ENCODE measurements at regions of chr4 and their contacts with region 1.

Region 1: GRCh38 chr4:140252742-140253555 is 99.0 kb upstream of the MAML3 start:
- DNase-seq: peak; percentile 56
- ATAC-seq: peak; percentile 84
- H3K4me3 ChIP-seq: peak overlapping the region; percentile 42
- H3K27ac ChIP-seq: peak overlapping the region; percentile 78
- H3K4me1 ChIP-seq: peaks cover 25% of the 10 kb centered on the region
- H3K27me3 ChIP-seq: no peaks in the 10 kb centered on the region
- CTCF ChIP-seq: peak; percentile 89
- POLR2A ChIP-seq: no peak
- RAD21 ChIP-seq: peak; percentile 88

Region 2: DNA sequence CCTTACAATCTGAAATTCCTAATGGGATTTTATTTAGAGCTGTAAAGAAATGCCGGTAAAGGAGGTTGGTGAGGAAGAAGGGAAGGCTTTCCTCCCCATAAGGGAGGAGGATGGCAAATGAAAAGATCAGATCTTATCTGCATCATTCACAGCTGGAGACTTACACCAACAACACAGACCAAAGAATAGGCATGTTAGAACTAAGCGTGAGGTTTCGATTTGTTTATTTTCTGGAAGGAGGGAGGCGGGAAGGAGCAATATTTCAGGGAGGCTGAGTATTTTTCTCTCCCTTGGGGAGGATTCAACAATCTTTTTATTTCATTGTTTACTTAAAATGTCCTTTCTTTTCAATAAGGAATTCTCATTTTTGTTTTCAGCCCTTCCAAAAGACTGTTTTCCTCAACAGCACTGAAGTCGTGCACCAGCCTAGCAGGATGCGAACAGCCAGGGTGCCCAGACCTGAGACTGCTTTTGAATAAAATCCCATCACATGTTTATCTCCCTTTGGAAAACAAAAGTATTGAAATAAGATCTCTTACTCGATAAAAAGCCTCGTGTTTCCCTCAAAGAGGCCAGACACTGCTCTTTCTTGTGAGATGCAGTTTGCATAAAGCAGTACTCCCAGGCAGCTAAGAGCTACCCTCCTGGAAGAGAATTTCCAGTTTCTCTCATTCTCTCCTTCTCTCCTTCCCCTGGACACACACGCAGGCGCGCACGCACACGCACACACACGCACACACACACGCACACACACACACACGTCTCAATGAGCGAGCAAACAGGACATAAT is 351.2 kb before region 1 on chr4:
- CTCF ChIA-PET with region 1: no interaction called
- POLR2A ChIA-PET with region 1: no interaction called
- dilution Hi-C with region 1: no loop called
- in situ Hi-C with region 1: no loop called
- intact Hi-C with region 1: loop called (anchors 10 kb)
- DNase-seq: peak; percentile 44
- ATAC-seq: peak; percentile 68
- H3K4me3 ChIP-seq: peak overlapping the region; percentile 38
- H3K27ac ChIP-seq: peak overlapping the region; percentile 26; the same call in 1 of the 2 replicates
- H3K4me1 ChIP-seq: peaks cover 4% of the 10 kb centered on the region
- H3K27me3 ChIP-seq: no peaks in the 10 kb centered on the region
- CTCF ChIP-seq: no peak
- POLR2A ChIP-seq: no peak
- RAD21 ChIP-seq: no peak

Region 3: DNA sequence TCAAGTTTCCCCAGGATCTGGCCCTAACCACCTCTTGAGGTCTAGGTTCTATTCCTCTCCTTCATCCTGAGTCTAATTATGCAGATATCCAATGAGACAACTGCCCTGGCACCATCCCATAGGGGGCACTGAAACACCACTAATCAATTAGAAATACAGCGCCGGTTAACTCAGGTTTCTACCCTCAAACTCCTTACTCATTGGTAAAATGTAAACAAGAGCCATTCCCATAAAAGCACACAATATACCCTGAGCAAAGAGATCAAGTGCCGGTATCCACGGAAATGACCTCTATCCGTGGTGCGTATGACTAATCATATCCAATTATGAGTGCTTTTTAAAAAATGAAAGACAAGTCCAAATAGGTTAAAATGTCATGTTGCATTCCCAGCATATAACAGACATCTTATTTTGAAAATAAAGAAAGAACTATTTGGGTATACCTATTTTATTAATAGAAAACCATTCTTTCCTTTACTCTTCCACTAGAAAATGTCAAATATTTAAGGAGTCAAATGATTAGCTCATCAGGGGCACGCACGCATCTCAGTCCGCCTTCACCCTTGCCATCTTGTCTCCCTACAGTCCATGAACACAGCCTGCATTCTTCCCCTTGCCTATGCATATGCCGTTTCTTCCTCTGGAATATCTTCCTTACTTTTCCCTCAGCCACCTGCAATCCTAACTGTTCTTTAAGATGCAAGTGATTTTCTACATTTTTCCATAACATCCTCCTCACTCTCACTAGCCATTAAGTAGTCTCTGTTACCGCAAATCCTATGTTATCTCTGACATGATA is 240.1 kb before region 1 on chr4:
- CTCF ChIA-PET with region 1: interaction called, 8 read pairs
- POLR2A ChIA-PET with region 1: no interaction called
- dilution Hi-C with region 1: no loop called
- in situ Hi-C with region 1: loop called (anchors 5 kb)
- intact Hi-C with region 1: loop called (anchors 1 kb)
- DNase-seq: peak; percentile 95
- ATAC-seq: peak; percentile 98
- H3K4me3 ChIP-seq: no peak overlapping the region
- H3K27ac ChIP-seq: no peak overlapping the region
- H3K4me1 ChIP-seq: peaks cover 4% of the 10 kb centered on the region
- H3K27me3 ChIP-seq: no peaks in the 10 kb centered on the region
- CTCF ChIP-seq: peak; percentile 91
- POLR2A ChIP-seq: no peak
- RAD21 ChIP-seq: peak; percentile 95

Region 4: DNA sequence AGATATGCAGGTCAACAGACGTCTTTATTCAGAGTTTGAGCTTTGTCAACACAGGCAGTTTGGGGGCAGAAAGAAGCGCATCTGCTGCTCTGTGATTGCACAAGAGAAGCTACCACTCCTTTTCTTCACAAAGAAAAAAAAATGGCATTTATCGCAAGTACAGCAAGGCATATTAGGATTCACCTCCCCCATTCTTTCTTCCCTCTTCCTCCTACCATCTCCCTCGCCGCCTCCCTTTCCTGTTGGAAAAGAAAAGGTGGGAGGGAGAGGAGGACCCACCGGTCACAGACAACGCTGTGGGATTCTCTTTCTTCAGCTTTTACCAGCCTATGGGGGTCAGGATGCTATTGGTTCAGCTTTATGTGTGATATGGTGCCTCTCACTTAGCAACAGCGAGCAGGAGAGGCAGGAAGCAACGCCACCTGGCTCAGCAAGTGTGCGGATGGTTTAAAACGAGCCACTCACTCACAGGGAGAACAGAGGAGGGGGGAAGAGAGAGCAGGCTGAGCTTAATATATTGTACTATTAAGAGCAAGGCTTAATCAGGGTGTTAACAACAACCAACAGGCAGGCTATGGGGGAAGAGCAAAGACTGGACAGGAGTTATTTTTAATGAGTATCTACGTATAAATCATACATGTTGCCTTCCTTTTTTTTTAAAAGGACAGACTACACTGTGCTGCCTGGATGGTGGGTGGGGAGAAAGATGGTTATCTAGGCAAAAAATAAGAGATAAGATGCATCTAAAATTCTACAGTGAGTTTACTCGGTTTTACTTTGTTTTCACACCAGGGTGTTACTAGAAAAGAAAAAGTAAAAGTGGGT is 203.7 kb before region 1 on chr4:
- CTCF ChIA-PET with region 1: interaction called, 5 read pairs
- POLR2A ChIA-PET with region 1: no interaction called
- dilution Hi-C with region 1: no loop called
- in situ Hi-C with region 1: no loop called
- intact Hi-C with region 1: loop called (anchors 2 kb)
- DNase-seq: peak; percentile 57
- ATAC-seq: peak; percentile 55
- H3K4me3 ChIP-seq: peak overlapping the region; percentile 34
- H3K27ac ChIP-seq: peak overlapping the region; percentile 79
- H3K4me1 ChIP-seq: peaks cover 12% of the 10 kb centered on the region
- H3K27me3 ChIP-seq: no peaks in the 10 kb centered on the region
- CTCF ChIP-seq: no peak
- POLR2A ChIP-seq: no peak
- RAD21 ChIP-seq: no peak

Region 5: DNA sequence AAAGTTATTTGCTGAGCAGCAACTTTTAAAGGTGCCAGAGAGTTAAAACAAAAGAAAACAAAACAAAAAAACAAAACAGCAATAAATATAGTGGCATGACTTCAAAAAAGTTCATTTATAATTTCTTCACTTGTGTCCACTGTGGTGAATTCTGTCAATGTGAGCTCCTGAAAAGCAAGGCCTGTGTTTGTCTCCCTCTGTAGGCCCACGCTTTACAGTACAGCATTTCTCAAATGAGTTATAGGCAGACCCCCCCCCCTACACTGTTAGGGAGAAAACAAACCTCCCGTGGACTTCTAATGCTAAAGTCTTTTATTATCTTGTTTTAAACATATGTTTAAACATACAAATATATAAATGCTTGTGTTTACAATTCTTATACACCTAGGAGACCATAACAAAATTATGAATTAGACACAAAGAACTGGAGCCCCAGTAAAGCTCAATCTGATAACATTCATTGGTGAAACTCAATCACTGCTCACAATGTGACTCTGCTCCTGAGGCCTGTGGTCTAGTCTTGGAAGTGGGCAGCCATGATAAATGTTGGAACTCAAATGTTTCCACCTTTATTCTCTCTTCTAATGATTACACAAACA is 73.5 kb after region 1 on chr4:
- CTCF ChIA-PET with region 1: interaction called, 7 read pairs
- POLR2A ChIA-PET with region 1: no interaction called
- dilution Hi-C with region 1: no loop called
- in situ Hi-C with region 1: no loop called
- intact Hi-C with region 1: loop called (anchors 1 kb)
- DNase-seq: peak; percentile 65
- ATAC-seq: peak; percentile 85
- H3K4me3 ChIP-seq: no peak overlapping the region
- H3K27ac ChIP-seq: no peak overlapping the region
- H3K4me1 ChIP-seq: no peaks in the 10 kb centered on the region
- H3K27me3 ChIP-seq: no peaks in the 10 kb centered on the region
- CTCF ChIP-seq: peak; percentile 74
- POLR2A ChIP-seq: no peak
- RAD21 ChIP-seq: peak; percentile 84

Measured in IMR-90 (cell line).